ENCODE measurements at regions of chr7 and their contacts with region 1.

Region 1: DNA sequence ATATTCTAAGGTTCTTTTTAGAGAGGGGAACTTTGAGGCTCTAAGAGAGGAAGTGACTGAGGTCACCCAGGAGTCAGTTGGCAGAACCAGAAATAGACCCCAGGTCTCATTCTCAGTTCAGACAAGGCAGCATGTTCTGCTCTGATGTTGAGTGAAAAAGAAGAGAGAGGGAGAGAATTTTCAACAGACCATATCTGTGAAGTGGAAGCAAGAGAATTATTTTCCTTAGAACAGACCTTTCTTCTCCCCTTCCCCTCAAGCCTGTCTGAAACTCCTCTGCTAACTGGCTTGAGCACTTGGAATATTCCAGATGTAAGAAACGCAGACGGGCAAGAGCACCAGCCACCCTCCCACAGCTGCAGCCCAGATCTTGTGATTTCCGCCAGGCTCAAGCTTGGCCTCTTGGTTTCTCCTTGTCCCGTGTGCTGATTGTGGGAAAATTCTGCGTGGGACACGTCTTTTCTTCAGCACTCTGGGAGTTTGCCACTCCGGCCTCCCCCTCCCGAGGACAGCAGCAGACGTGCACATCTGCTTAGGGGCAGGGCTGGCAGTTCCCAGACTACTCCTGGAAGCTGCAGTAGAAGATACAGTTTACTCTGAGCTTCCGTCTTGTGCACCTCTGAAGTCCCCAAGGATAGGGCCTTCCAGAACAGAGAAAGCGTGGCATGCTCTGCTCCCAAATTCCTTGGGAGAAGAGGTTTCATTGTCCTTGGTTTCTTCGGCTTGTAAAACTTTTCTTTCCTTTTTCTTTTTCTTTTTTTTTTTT is 22.7 kb upstream of the IKZF1 start:
- DNase-seq: peak in 5 of 10 donors; percentile 35 to 54 (median 42)
- ATAC-seq: peak; percentile 84 to 94
- H3K4me3 Mint-ChIP-seq: peak overlapping the region; percentile 60 to 90 (median 82)
- H3K27ac Mint-ChIP-seq: peak overlapping the region; percentile 84 to 99 (median 94)
- H3K4me1 Mint-ChIP-seq: peaks cover 28 to 83% (median 74%) of the 10 kb centered on the region in 4 donors
- H3K27me3 Mint-ChIP-seq: no peaks in the 10 kb centered on the region

Region 2: GRCh38 chr7:50298811-50299562 is 17.1 kb after region 1 on chr7:
- POLR2A ChIA-PET with region 1: interaction called, 14 read pairs
- DNase-seq: no peak
- ATAC-seq: no peak
- H3K4me3 Mint-ChIP-seq: peak overlapping the region in 1 of 10 donors; percentile 37
- H3K27ac Mint-ChIP-seq: peak overlapping the region in 8 of 10 donors; percentile 32 to 93 (median 85)
- H3K4me1 Mint-ChIP-seq: peaks cover 34 to 68% (median 59%) of the 10 kb centered on the region in 4 donors
- H3K27me3 Mint-ChIP-seq: no peaks in the 10 kb centered on the region

Region 3: GRCh38 chr7:50481867-50482266 is 200.0 kb after region 1 on chr7:
- POLR2A ChIA-PET with region 1: no interaction called
- DNase-seq: no peak
- ATAC-seq: no peak
- H3K4me3 Mint-ChIP-seq: no peak overlapping the region
- H3K27ac Mint-ChIP-seq: no peak overlapping the region
- H3K4me1 Mint-ChIP-seq: no peaks in the 10 kb centered on the region
- H3K27me3 Mint-ChIP-seq: no peaks in the 10 kb centered on the region

Region 4: GRCh38 chr7:50751146-50751545 is 469.3 kb after region 1 on chr7:
- POLR2A ChIA-PET with region 1: no interaction called
- DNase-seq: no peak
- ATAC-seq: no peak
- H3K4me3 Mint-ChIP-seq: no peak overlapping the region
- H3K27ac Mint-ChIP-seq: peak overlapping the region in 2 of 10 donors; percentile 5 to 68
- H3K4me1 Mint-ChIP-seq: peaks cover 7 to 19% (median 15%) of the 10 kb centered on the region in 4 donors
- H3K27me3 Mint-ChIP-seq: no peaks in the 10 kb centered on the region

Region 5: DNA sequence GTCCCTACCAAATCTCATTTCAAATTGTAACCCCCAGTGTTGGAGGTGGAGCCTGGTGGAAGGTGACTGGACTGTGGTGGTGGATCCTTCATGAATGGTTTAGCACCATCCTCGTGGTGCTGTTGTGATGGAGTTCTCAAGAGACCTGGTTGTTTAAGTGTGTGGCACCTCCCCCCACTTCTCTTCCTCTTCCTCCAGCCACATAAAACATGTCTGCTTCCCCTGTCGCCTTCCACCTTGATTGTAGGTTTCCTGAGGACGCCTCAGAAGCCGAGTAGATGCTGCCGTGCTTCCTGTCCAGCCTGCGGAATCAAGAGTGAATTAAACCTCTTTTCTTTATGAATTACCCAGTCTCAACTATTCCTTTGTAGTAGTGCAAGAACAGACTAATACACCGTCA is 479.9 kb after region 1 on chr7:
- POLR2A ChIA-PET with region 1: no interaction called
- DNase-seq: peak in 3 of 10 donors; percentile 23 to 35 (median 26)
- ATAC-seq: peak; percentile 42 to 79
- H3K4me3 Mint-ChIP-seq: peak overlapping the region in 9 of 10 donors; percentile 17 to 72 (median 45)
- H3K27ac Mint-ChIP-seq: peak overlapping the region; percentile 4 to 90 (median 73)
- H3K4me1 Mint-ChIP-seq: peaks cover 17 to 28% (median 20%) of the 10 kb centered on the region in 4 donors
- H3K27me3 Mint-ChIP-seq: no peaks in the 10 kb centered on the region

Measured in naive thymus-derived CD8-positive, alpha-beta T cell (primary cell).